Activated CD4-positive, alpha-beta memory T cell treated with anti-CD3 and anti-CD28 coated beads, Interleukin-2, amount 10 ng/mL, durations not matched to agents 7 days and 5 days (primary cell): ENCODE measurements at regions of chr16 and their contacts with region 1.

Region 1: GRCh38 chr16:48632137-48632774 is 22.3 kb upstream of the N4BP1 start:
- DNase-seq: no peak
- H3K4me3 Mint-ChIP-seq: no peak overlapping the region
- H3K27ac Mint-ChIP-seq: no peak overlapping the region
- H3K4me1 Mint-ChIP-seq: peaks cover 12% of the 10 kb centered on the region
- H3K27me3 Mint-ChIP-seq: peaks cover 9% of the 10 kb centered on the region

Region 2: GRCh38 chr16:48256579-48257177 is 375.6 kb before region 1 on chr16:
- CTCF ChIA-PET with region 1: no interaction called
- POLR2A ChIA-PET with region 1: no interaction called
- DNase-seq: no peak
- H3K4me3 Mint-ChIP-seq: no peak overlapping the region
- H3K27ac Mint-ChIP-seq: no peak overlapping the region
- H3K4me1 Mint-ChIP-seq: no peaks in the 10 kb centered on the region
- H3K27me3 Mint-ChIP-seq: no peaks in the 10 kb centered on the region

Region 3: GRCh38 chr16:48353565-48354163 is 278.6 kb before region 1 on chr16:
- CTCF ChIA-PET with region 1: interaction called, 33 read pairs
- POLR2A ChIA-PET with region 1: interaction called, 3 read pairs
- DNase-seq: peak; percentile 73
- H3K4me3 Mint-ChIP-seq: no peak overlapping the region
- H3K27ac Mint-ChIP-seq: peak overlapping the region; percentile 55
- H3K4me1 Mint-ChIP-seq: peaks cover 13% of the 10 kb centered on the region
- H3K27me3 Mint-ChIP-seq: no peaks in the 10 kb centered on the region

Region 4: GRCh38 chr16:48596326-48596725 is 35.9 kb before region 1 on chr16:
- CTCF ChIA-PET with region 1: no interaction called
- POLR2A ChIA-PET with region 1: no interaction called
- DNase-seq: peak; percentile 50
- H3K4me3 Mint-ChIP-seq: no peak overlapping the region
- H3K27ac Mint-ChIP-seq: peak overlapping the region; percentile 66
- H3K4me1 Mint-ChIP-seq: peaks cover 43% of the 10 kb centered on the region
- H3K27me3 Mint-ChIP-seq: no peaks in the 10 kb centered on the region